Mammary epithelial cell (primary cell): ENCODE measurements at regions of chr11 and their contacts with region 1.

Region 1: DNA sequence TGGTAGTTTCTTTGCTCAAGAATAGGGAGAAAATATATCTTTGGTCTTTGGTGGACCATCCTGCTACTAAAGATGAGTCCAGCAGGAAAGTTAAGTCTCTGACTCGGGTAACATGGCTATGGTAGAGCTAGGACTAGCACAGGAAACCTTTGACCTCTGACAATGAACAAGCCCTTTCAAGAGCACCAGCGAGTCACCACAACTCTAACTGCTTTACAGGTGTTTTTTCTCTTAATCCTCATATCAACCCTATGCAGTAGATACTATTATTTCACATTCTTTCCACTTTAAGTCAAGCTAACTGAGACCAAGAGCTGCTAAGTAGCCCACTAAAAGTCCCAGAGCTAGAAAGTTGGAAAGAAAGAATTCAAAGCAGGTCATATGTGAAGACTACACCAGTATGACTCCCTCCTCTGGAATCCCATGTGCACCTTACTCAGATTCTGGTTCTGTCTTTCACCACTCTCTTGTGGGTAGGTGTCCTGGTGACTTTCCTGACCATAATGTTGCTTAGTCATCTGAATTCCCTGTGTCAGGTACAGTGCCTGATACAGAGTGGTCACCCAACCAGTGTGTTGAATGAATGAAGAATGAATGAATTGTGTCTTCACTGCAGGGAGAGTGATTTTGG is 53.8 kb upstream of the ME3 start:
- DNase-seq: peak; percentile 95
- H3K4me3 ChIP-seq: no peak overlapping the region
- H3K27ac ChIP-seq: peak overlapping the region; percentile 66
- H3K4me1 ChIP-seq: peaks cover 42% of the 10 kb centered on the region
- H3K27me3 ChIP-seq: no peaks in the 10 kb centered on the region
- CTCF ChIP-seq: no peak

Region 2: DNA sequence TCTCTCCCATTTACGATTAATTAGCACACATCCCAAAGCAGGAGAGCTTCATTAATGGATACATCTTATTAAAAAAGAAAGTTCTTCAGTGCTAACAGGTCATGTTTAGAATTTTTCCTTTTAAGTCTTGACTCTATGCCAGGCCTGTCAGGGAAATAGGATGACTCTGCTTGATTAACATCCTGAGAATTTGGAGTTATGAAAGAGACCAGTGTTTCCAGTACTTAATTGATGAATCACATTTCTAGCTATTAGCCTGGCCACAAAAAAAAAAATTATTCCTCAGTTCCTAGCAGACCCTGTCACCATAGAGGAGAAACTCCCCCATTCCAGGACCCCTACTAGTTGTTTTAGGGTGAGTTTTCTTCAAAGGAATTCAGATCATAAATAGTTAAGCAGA is 30.2 kb before region 1 on chr11:
- CTCF ChIA-PET with region 1: no interaction called
- dilution Hi-C with region 1: no loop called
- in situ Hi-C with region 1: no loop called
- intact Hi-C with region 1: loop called (anchors 2 kb)
- DNase-seq: peak; percentile 86
- H3K4me3 ChIP-seq: no peak overlapping the region
- H3K27ac ChIP-seq: peak overlapping the region; percentile 64
- H3K4me1 ChIP-seq: peaks cover 49% of the 10 kb centered on the region
- H3K27me3 ChIP-seq: no peaks in the 10 kb centered on the region
- CTCF ChIP-seq: no peak